Activated CD4-positive, alpha-beta memory T cell treated with anti-CD3 and anti-CD28 coated beads for 36 hours (primary cell): ENCODE measurements at regions of chr17 and their contacts with region 1.

Region 1: GRCh38 chr17:20155258-20156195 is 146.4 kb downstream of the SPECC1 start:
- DNase-seq: peak; percentile 97
- H3K4me3 Mint-ChIP-seq: no peak overlapping the region
- H3K27ac Mint-ChIP-seq: no peak overlapping the region
- H3K4me1 Mint-ChIP-seq: peaks cover 4% of the 10 kb centered on the region
- H3K27me3 Mint-ChIP-seq: peaks cover 4% of the 10 kb centered on the region

Region 2: GRCh38 chr17:19977311-19978208 is 178.0 kb before region 1 on chr17 and contains the start of gene AKAP10:
- CTCF ChIA-PET with region 1: no interaction called
- POLR2A ChIA-PET with region 1: interaction called, 4 read pairs
- intact Hi-C with region 1: loop called (anchors 1 kb)
- DNase-seq: peak; percentile 96
- H3K4me3 Mint-ChIP-seq: peak within 1 kb of the TSS; percentile 94
- H3K27ac Mint-ChIP-seq: peak within 1 kb of the TSS; percentile 97
- H3K4me1 Mint-ChIP-seq: peaks cover 49% of the 10 kb centered on the region
- H3K27me3 Mint-ChIP-seq: no peaks in the 10 kb centered on the region
- total RNA-seq, gene AKAP10: 28.4 to 31.8 TPM

Region 3: GRCh38 chr17:20009302-20010098 is 146.0 kb before region 1 on chr17 and contains the start of gene SPECC1:
- CTCF ChIA-PET with region 1: interaction called, 3 read pairs
- POLR2A ChIA-PET with region 1: no interaction called
- intact Hi-C with region 1: loop called (anchors 5 kb)
- DNase-seq: peak; percentile 92
- H3K4me3 Mint-ChIP-seq: peak within 1 kb of the TSS; percentile 73
- H3K27ac Mint-ChIP-seq: no peak within 1 kb of the TSS
- H3K4me1 Mint-ChIP-seq: peaks cover 11% of the 10 kb centered on the region
- H3K27me3 Mint-ChIP-seq: peaks cover 27% of the 10 kb centered on the region
- total RNA-seq, gene SPECC1: 15.4 to 17.0 TPM

Region 4: DNA sequence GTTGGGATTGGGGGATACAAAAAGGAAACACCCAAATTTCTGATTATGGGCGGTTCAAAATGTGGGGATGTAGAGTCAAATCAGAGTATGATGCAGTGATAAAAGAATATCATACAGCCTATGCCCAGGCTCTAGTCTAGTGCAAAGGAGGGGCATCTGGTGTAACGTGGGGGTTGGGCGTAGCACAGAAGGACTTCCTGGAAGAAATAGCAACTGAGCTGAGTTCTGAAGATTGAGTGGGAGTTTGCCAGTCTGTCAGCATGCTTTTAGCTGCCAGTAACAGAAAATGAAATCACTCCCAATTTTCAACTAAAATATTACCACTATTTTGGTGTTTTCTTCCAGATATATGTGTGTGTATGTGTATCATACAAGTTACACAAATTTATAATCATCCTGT is 50.5 kb after region 1 on chr17:
- CTCF ChIA-PET with region 1: no interaction called
- POLR2A ChIA-PET with region 1: interaction called, 3 read pairs
- intact Hi-C with region 1: loop called (anchors 1 kb)
- DNase-seq: peak; percentile 63
- H3K4me3 Mint-ChIP-seq: no peak overlapping the region
- H3K27ac Mint-ChIP-seq: peak overlapping the region; percentile 15
- H3K4me1 Mint-ChIP-seq: peaks cover 18% of the 10 kb centered on the region
- H3K27me3 Mint-ChIP-seq: no peaks in the 10 kb centered on the region

Region 5: DNA sequence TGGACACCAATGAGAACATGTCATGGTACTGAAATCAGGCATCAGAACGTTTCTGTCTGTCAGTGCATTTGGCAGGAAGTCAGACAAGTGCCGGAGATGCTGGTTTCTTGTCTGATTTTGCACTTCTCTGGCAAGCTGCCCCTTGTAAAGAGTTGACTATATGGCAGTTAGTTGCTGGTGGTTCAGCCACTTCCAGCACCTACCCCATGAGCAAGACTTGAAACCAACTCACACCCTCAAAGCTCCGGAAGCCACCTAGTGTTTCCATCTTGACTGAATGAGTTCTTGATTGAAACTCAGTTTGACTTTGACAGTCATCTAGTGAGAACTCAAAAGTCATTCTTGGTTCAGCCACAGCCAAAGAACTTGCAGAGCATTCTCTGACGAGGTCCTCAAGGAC is 78.7 kb after region 1 on chr17:
- CTCF ChIA-PET with region 1: no interaction called
- POLR2A ChIA-PET with region 1: no interaction called
- intact Hi-C with region 1: loop called (anchors 1 kb)
- DNase-seq: peak; percentile 86
- H3K4me3 Mint-ChIP-seq: peak overlapping the region; percentile 18
- H3K27ac Mint-ChIP-seq: peak overlapping the region; percentile 84
- H3K4me1 Mint-ChIP-seq: peaks cover 28% of the 10 kb centered on the region
- H3K27me3 Mint-ChIP-seq: no peaks in the 10 kb centered on the region

Region 6: DNA sequence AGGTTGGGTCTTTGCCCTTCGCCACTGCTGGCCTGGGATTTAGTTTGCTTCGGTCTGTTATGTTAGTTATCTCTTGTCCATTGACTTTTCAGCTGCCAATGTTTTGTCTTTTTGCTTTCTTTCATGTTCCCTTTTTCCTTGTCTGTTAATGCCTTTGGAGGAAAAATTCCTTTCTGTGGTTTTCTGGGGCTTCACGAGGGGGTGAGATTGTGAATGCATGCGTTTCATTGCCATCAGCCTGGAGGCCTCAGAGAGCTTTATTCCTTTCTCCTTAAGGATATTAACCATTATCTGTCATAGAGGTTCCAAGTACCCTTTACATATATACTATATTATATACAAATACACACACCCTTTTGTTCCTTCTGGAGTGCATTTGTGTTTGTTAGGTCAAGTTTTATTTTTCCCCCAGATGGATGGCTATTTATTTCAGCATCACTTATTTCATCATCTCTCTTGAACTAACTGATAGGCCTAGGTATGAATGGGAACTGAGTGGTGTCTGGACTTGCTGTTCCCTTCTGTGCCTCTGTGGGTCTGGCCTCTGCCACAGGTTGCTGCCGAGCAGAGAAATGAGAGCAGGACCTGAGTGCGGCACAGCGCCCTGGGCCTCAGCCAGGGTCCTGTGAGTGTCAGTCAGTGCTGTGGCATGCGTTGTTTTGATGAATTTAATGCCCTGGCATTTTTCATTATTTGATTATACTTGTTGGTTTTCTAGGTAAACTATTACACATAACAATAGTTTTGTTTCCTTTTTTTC is 118.4 kb after region 1 on chr17:
- CTCF ChIA-PET with region 1: no interaction called
- POLR2A ChIA-PET with region 1: no interaction called
- intact Hi-C with region 1: loop called (anchors 5 kb)
- DNase-seq: peak; percentile 36
- H3K4me3 Mint-ChIP-seq: peak overlapping the region; percentile 18
- H3K27ac Mint-ChIP-seq: peak overlapping the region; percentile 36
- H3K4me1 Mint-ChIP-seq: peaks cover 72% of the 10 kb centered on the region
- H3K27me3 Mint-ChIP-seq: no peaks in the 10 kb centered on the region